Astrocyte of the cerebellum (primary cell): ENCODE measurements at regions of chr16 and their contacts with region 1.

Region 1: GRCh38 chr16:22641131-22641628 is 130.5 kb downstream of the NPIPB5 start:
- DNase-seq: no peak
- H3K4me3 ChIP-seq: no peak overlapping the region
- CTCF ChIP-seq: no peak

Region 2: DNA sequence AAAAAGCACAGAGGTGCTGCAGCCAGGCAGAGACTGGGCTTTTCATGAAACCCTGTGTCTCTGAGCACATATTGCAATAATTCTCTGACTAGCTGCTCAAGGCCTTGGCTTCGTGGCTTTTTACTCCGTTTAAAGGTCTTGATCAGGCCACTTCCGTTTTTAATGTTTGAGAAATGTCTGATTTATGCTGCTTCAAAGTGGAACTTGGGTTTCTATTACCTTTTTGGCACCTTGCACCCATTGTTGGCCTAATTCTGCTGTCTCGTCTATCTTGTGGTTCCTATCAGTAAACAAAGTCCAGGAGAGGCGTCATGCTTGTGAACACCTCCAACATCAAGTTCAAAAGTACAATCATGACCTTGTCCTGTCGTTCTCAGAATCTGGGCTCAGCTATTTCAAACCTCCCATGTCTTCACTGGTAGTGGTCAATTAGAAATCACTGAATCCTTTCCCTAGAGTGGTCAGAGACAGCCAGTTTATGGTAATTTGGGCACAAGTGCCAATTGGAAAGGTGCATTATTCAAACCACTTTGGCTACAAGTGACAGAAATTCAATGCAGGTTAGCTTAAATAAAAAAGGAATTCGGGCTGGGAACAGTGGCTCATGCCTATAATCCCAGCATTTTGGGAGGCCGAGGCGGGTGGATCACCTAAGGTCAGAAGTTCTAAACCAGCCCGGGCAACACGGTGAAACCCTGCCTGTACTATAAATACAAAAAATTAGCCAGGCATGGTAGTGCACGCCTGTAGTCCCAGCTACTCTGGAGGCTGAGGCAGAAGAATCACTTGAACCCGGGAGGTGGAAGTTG is 1075.1 kb before region 1 on chr16:
- in situ Hi-C with region 1: loop called (anchors 5 kb)
- DNase-seq: no peak
- H3K4me3 ChIP-seq: no peak overlapping the region
- CTCF ChIP-seq: no peak